Spleen (tissue), 13 donors: ENCODE measurements at regions of chr20 and their contacts with region 1.

Region 1: DNA sequence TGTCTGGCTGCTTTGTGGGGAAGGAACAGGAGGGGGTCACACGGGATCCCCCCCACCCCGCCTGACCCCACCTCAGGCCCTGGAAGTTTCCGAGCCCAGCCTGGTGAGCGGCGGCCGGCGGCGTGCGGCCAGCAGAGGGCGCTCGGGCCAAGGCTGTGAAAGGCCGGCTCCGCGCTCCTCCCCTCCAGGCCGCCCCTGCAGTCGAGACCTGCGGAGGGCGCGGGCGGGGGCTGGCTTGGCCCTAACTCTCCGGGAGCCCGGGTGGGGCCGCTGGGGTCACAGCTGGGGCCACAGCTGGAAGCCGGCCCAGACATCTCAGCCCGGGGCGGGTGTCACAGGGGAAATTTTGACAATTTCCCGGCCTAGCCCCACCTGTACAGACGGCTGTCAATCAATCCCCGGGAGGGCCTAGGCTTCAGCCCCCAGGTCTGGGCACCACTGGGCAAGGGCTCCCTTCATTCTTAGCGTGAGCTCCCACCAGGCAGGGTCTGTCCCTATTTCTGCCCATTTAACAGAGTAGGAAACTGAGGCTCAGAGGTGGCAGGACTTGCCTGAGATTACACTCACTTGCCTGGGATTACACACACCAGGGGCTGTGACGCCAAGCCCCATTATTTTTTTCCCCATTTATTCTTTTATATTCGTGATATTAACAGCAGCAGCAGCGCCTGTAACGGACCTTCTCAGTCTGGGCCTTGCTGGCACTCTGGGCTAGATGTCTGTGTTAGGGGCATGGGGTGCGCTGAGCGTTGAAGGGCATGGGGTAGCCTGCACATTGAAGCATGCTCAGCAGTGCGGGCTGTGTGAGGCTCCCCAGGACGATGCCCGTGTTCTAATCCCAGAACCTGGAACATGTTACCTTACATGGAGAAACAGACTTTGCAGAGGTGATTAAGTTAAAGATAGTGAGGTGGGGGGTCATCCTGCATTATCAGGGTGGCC is 23.0 kb downstream of the ZBP1 start:
- DNase-seq: peak; percentile 94
- H3K4me3 ChIP-seq: peak overlapping the region in 3 of 8 donors; percentile 7 to 55 (median 18)
- H3K27ac ChIP-seq: no peak overlapping the region
- H3K4me1 ChIP-seq: peaks cover 0 to 44% (median 20%) of the 10 kb centered on the region in 6 donors
- H3K27me3 ChIP-seq: peaks cover 0 to 11% (median 0%) of the 10 kb centered on the region in 7 donors
- CTCF ChIP-seq: peak; percentile 73 to 98 (median 95)
- POLR2A ChIP-seq: no peak

Region 2: DNA sequence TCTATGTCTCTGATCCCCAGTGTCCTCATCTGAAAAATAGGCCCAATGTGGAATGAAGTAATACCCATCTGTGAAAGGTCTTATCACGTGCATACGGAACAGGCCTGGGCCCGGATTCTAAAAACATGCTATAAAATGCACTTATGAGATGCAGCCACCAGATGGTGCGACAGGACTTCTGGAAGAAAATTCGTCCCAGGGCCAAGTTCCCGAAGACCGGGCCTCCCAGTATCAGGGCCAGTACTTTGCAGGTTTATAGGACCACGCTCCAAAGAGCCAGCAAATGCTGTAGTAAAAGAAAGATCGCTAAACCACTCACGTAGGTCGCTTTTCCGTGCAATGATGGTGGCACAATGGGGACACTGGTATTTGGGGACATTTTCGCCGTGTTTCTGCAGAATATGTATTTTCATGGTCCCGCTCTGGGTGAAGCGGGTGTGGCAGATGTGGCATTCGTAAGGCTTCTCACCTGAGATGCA is 83.0 kb before region 1 on chr20:
- intact Hi-C with region 1: loop called (anchors 2 kb)
- DNase-seq: no peak
- H3K4me3 ChIP-seq: no peak overlapping the region
- H3K27ac ChIP-seq: no peak overlapping the region
- H3K4me1 ChIP-seq: peaks cover 0 to 8% (median 3%) of the 10 kb centered on the region in 6 donors
- H3K27me3 ChIP-seq: peaks cover 0 to 7% (median 0%) of the 10 kb centered on the region in 7 donors
- CTCF ChIP-seq: peak; percentile 34 to 76 (median 66)
- POLR2A ChIP-seq: no peak

Region 3: DNA sequence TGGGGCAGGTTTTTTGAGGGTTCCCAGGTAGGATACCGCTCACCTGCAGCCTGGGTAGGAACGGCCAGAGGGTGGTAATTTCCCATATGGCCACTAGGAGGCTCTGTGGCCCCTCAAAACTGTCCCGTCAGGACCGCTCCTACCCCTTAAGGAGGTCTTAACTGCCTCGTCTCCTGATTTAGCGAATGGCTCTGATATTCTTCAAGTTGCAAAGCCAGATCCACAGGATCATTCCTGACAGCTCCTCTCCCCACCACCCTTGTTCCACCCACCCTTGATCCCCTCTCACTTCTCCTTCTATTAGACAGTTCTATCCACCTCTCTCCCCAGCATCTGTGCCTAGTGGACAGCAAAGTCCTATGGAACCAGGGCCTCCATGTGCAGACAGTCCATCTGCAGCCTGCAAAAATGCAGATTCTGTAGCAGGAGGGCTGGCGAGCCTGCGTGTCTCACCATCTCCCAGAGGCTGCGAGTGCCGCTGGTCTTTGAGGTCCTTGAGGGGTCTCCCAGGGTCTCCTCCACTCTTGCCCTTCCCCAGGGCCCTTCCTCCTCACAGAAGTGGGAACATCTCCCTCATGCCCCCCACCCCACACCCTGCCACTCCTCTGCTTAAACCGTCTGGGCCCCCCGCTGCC is 57.2 kb after region 1 on chr20:
- intact Hi-C with region 1: loop called (anchors 10 kb)
- DNase-seq: peak; percentile 81
- H3K4me3 ChIP-seq: no peak overlapping the region
- H3K27ac ChIP-seq: no peak overlapping the region
- H3K4me1 ChIP-seq: peaks cover 0 to 38% (median 19%) of the 10 kb centered on the region in 6 donors
- H3K27me3 ChIP-seq: no peaks in the 10 kb centered on the region
- CTCF ChIP-seq: peak; percentile 78 to 94 (median 91)
- POLR2A ChIP-seq: no peak

Region 4: GRCh38 chr20:57680131-57680716 is 83.0 kb after region 1 on chr20:
- intact Hi-C with region 1: no loop called
- DNase-seq: no peak
- H3K4me3 ChIP-seq: peak overlapping the region in 1 of 8 donors; percentile 13
- H3K27ac ChIP-seq: peak overlapping the region in 4 of 8 donors; percentile 47 to 77 (median 58)
- H3K4me1 ChIP-seq: peaks cover 20 to 100% (median 71%) of the 10 kb centered on the region in 6 donors
- H3K27me3 ChIP-seq: no peaks in the 10 kb centered on the region
- CTCF ChIP-seq: no peak
- POLR2A ChIP-seq: no peak

Region 5: GRCh38 chr20:57698117-57698866 is 101.0 kb after region 1 on chr20:
- intact Hi-C with region 1: no loop called
- DNase-seq: no peak
- H3K4me3 ChIP-seq: no peak overlapping the region
- H3K27ac ChIP-seq: no peak overlapping the region
- H3K4me1 ChIP-seq: peaks cover 0 to 99% (median 66%) of the 10 kb centered on the region in 6 donors
- H3K27me3 ChIP-seq: no peaks in the 10 kb centered on the region
- CTCF ChIP-seq: no peak
- POLR2A ChIP-seq: no peak

Region 6: GRCh38 chr20:58179432-58180099 is 582.3 kb after region 1 on chr20:
- intact Hi-C with region 1: loop called (anchors 10 kb)
- DNase-seq: peak; percentile 91
- H3K4me3 ChIP-seq: peak overlapping the region in 5 of 8 donors; percentile 11 to 58 (median 13)
- H3K27ac ChIP-seq: no peak overlapping the region
- H3K4me1 ChIP-seq: peaks cover 5 to 23% (median 13%) of the 10 kb centered on the region in 6 donors
- H3K27me3 ChIP-seq: peaks cover 0 to 65% (median 7%) of the 10 kb centered on the region in 7 donors
- CTCF ChIP-seq: peak; percentile 83 to 100 (median 96)
- POLR2A ChIP-seq: no peak

Region 7: GRCh38 chr20:58209652-58210397 is 612.6 kb after region 1 on chr20:
- intact Hi-C with region 1: loop called (anchors 2 kb)
- DNase-seq: peak; percentile 97
- H3K4me3 ChIP-seq: no peak overlapping the region
- H3K27ac ChIP-seq: no peak overlapping the region
- H3K4me1 ChIP-seq: peaks cover 0 to 11% (median 5%) of the 10 kb centered on the region in 6 donors
- H3K27me3 ChIP-seq: peaks cover 0 to 35% (median 11%) of the 10 kb centered on the region in 7 donors
- CTCF ChIP-seq: peak; percentile 98 to 100 (median 100)
- POLR2A ChIP-seq: no peak